Activated naive CD4-positive, alpha-beta T cell treated with anti-CD3 and anti-CD28 coated beads for 36 hours (primary cell): ENCODE measurements at regions of chr6 and their contacts with region 1.

Region 1: GRCh38 chr6:2853761-2854395 is 12.2 kb upstream of the SERPINB1 start:
- DNase-seq: peak; percentile 96
- H3K4me3 Mint-ChIP-seq: peak overlapping the region; percentile 59
- H3K27ac Mint-ChIP-seq: peak overlapping the region; percentile 100
- H3K4me1 Mint-ChIP-seq: peaks cover 64% of the 10 kb centered on the region
- H3K27me3 Mint-ChIP-seq: no peaks in the 10 kb centered on the region

Region 2: GRCh38 chr6:2791124-2791974 is 62.5 kb before region 1 on chr6:
- CTCF ChIA-PET with region 1: interaction called, 8 read pairs
- intact Hi-C with region 1: loop called (anchors 1 kb)
- DNase-seq: peak; percentile 87
- H3K4me3 Mint-ChIP-seq: no peak overlapping the region
- H3K27ac Mint-ChIP-seq: no peak overlapping the region
- H3K4me1 Mint-ChIP-seq: peaks cover 39% of the 10 kb centered on the region
- H3K27me3 Mint-ChIP-seq: no peaks in the 10 kb centered on the region

Region 3: GRCh38 chr6:2841264-2842138 is 12.4 kb before region 1 on chr6 and contains the start of gene SERPINB1:
- CTCF ChIA-PET with region 1: interaction called, 26 read pairs
- intact Hi-C with region 1: loop called (anchors 1 kb)
- DNase-seq: peak; percentile 94
- H3K4me3 Mint-ChIP-seq: peak within 1 kb of the TSS; percentile 81
- H3K27ac Mint-ChIP-seq: peak within 1 kb of the TSS; percentile 87
- H3K4me1 Mint-ChIP-seq: peaks cover 61% of the 10 kb centered on the region
- H3K27me3 Mint-ChIP-seq: no peaks in the 10 kb centered on the region
- total RNA-seq, gene SERPINB1: 200 to 208 TPM

Region 4: GRCh38 chr6:2876210-2877056 is 22.6 kb after region 1 on chr6:
- CTCF ChIA-PET with region 1: interaction called, 10 read pairs
- intact Hi-C with region 1: no loop called
- DNase-seq: no peak
- H3K4me3 Mint-ChIP-seq: peak overlapping the region; percentile 75
- H3K27ac Mint-ChIP-seq: peak overlapping the region; percentile 80
- H3K4me1 Mint-ChIP-seq: peaks cover 80% of the 10 kb centered on the region
- H3K27me3 Mint-ChIP-seq: no peaks in the 10 kb centered on the region

Region 5: DNA sequence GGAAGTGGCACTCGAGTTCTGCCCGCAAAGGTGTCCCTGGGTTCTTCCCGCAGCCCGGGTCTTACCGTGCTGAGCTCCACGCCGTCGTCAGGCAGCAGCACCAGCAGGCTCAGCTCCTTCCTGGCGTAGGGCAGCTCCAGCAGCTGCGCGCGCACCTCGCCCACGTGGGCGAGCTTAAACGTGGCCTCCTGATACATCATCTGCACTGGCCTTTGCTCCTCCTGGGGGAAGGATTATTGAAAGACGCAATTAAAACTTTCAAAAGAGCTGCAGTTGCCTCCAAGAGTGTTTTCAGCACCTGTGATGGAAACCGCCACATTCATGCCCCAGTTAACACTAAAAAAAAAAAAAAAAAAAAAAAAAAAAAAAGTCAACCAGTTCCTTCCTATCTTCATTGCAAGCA is 37.9 kb after region 1 on chr6:
- CTCF ChIA-PET with region 1: interaction called, 3 read pairs
- intact Hi-C with region 1: loop called (anchors 1 kb)
- DNase-seq: peak; percentile 85
- H3K4me3 Mint-ChIP-seq: peak overlapping the region; percentile 75
- H3K27ac Mint-ChIP-seq: peak overlapping the region; percentile 88
- H3K4me1 Mint-ChIP-seq: peaks cover 71% of the 10 kb centered on the region
- H3K27me3 Mint-ChIP-seq: no peaks in the 10 kb centered on the region

Region 6: GRCh38 chr6:2900821-2901644 is 47.2 kb after region 1 on chr6:
- CTCF ChIA-PET with region 1: interaction called, 32 read pairs
- intact Hi-C with region 1: loop called (anchors 1 kb)
- DNase-seq: no peak
- H3K4me3 Mint-ChIP-seq: peak overlapping the region; percentile 99
- H3K27ac Mint-ChIP-seq: peak overlapping the region; percentile 96
- H3K4me1 Mint-ChIP-seq: peaks cover 52% of the 10 kb centered on the region
- H3K27me3 Mint-ChIP-seq: no peaks in the 10 kb centered on the region

Region 7: DNA sequence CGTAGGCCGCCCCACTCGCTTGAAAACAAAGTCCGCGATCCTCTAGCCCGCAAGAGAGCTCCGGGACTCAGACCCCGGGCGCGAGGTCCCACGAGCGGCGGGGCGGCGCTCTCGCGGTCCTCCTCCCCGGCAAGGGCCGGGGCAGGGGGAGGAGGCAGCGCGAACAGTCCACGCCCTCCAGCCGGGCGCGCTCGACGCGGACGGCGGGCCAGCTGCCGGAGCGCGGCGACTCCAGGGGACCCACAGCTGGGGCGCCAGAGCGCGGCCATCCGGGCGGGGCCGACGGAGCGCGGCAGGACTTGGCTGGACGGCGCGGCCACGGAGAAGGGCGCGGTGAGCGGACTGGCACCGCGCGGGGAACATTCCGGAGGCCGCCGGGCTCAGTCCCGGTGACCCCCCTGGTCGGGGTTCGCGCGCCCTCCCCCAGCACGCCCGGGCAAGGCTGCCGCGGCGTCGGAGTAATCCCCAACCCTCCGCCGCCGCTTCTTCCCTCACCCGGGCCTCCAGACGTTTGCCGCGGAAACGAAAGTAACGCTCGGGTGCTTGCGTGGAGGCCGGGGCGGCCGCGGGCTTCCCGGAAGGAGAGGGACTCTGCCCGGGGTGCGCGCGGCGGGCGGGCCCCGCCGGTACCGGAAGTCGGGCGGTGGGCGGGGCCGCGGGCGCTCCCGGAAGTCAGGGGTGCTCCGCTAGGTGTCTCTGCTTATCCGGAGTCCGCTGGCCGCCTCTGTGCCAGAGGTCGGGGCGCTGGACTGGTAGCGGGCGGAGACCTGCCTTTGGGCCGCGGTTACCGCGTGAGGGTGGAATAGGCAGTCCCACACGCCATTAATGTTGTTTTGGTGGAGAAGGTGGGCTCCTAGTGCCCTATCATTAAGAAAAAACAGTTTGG is 214.7 kb after region 1 on chr6 and contains the start of gene RIPK1:
- CTCF ChIA-PET with region 1: no interaction called
- intact Hi-C with region 1: loop called (anchors 2 kb)
- DNase-seq: peak; percentile 95
- H3K4me3 Mint-ChIP-seq: peak within 1 kb of the TSS; percentile 92
- H3K27ac Mint-ChIP-seq: peak within 1 kb of the TSS; percentile 97
- H3K4me1 Mint-ChIP-seq: peaks cover 49% of the 10 kb centered on the region
- H3K27me3 Mint-ChIP-seq: no peaks in the 10 kb centered on the region
- total RNA-seq, gene RIPK1: 8.8 to 10.1 TPM